ENCODE measurements at regions of chr12 and their contacts with region 1.

Region 1: GRCh38 chr12:133037207-133038005 is at the start of gene ZNF84:
- DNase-seq: peak; percentile 92
- ATAC-seq: peak; percentile 95
- H3K4me3 Mint-ChIP-seq: peak within 1 kb of the TSS; percentile 91
- H3K27ac Mint-ChIP-seq: peak within 1 kb of the TSS; percentile 96
- H3K4me1 Mint-ChIP-seq: peaks cover 20% of the 10 kb centered on the region
- H3K27me3 Mint-ChIP-seq: peaks cover 2% of the 10 kb centered on the region
- CTCF ChIP-seq: no peak
- total RNA-seq, gene ZNF84: 34.8 and 41.1 TPM in 2 replicates

Region 2: GRCh38 chr12:132687208-132688164 is 349.9 kb before region 1 on chr12 and contains the starts of genes POLE and PXMP2:
- CTCF ChIA-PET with region 1: no interaction called
- POLR2A ChIA-PET with region 1: no interaction called
- intact Hi-C with region 1: loop called (anchors 1 kb)
- DNase-seq: peak; percentile 91
- ATAC-seq: peak; percentile 95
- H3K4me3 Mint-ChIP-seq: peak within 1 kb of the TSS; percentile 83
- H3K27ac Mint-ChIP-seq: no peak within 1 kb of the TSS
- H3K4me1 Mint-ChIP-seq: peaks cover 16% of the 10 kb centered on the region
- H3K27me3 Mint-ChIP-seq: no peaks in the 10 kb centered on the region
- CTCF ChIP-seq: no peak
- total RNA-seq, gene POLE: 51.1 and 64.3 TPM in 2 replicates
- total RNA-seq, gene PXMP2: 5.3 and 7.7 TPM in 2 replicates

Region 3: DNA sequence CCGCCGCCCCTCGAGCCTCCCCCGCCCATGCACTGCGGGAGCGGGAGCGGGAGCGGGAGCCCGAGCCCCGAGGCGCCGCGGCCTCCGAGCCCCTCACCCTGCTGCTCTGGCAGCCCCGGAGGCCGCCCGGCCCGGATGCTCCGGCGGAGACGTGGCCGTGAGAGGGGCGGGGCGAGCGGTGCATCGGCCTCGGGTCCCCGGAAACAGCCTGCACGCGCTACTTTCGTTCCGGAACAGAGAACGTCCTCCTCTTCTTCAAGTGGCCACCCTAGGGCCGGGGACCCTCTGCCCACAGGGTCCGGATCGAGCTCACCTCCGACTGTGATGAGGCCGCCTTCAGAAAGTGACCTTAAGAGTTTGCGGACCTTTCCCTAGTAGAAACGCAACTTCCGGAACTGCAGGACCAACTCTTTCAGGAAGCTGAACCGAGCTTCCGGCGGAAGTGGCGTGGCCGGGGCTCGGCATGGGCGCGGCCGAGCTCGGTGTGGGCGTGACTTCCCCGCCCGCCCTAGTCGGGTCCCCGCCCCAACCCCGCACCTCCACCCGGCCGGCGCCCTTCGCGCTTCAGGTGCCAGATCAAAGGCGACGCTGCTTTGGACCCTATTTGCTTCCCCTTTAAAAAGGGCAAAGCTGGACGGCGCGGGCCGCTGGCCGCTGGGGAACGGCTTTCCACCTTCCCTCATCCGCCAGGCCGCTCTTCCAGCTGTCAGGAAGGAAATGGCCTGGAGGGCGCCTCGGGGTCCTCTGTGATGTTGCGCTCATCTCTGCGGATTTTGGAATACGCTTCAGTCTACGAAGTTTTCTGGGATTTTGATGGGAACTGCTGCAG is 208.5 kb before region 1 on chr12 and contains the start of gene GOLGA3:
- CTCF ChIA-PET with region 1: no interaction called
- POLR2A ChIA-PET with region 1: no interaction called
- intact Hi-C with region 1: loop called (anchors 5 kb)
- DNase-seq: peak; percentile 95
- ATAC-seq: peak; percentile 92
- H3K4me3 Mint-ChIP-seq: peak within 1 kb of the TSS; percentile 96
- H3K27ac Mint-ChIP-seq: peak within 1 kb of the TSS; percentile 100
- H3K4me1 Mint-ChIP-seq: peaks cover 50% of the 10 kb centered on the region
- H3K27me3 Mint-ChIP-seq: no peaks in the 10 kb centered on the region
- CTCF ChIP-seq: no peak
- total RNA-seq, gene GOLGA3: 51.3 and 52.4 TPM in 2 replicates

Region 4: DNA sequence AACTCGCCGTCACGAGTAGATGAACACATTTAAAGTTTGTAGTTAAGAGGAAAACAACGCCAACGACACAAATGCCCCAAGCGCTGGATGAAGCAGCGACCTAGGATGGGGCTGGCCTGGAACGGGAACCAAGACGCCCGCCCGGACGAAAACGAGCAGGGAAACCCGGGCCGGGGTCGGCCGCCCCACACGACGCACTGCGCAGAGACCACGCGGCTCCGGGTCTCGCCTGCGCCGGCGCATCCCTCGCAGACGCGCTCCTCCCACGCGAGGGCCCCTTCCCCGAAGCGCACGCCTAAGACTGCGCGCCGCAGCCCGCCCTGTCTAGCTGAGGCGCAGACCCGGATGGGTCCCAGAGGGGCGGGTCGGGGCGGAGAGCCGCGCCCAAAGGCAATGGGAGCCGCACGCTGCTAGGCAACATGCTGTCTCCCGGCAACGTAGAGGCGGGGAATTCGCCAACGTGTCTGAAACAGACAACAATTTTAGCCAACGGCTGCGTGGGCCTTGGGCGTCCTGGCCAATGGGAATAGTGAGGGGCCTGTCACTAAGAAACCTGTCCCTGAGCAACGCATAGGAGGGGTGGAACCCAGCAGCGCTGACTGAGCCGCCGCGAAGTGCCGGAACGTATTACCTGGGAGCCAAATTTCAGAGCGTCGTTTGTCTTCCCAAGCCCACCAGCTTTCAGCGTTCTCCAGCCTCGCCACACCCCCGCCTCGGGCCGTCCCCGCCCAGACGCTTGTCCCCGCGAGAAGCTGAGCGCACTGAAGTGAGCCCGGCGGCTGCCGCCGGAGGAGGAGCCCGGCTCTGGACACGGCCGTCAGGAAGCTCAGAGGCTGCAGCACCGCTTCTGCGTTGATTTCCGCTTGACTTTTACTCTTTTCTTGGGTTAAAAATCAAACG is 129.0 kb before region 1 on chr12:
- CTCF ChIA-PET with region 1: no interaction called
- POLR2A ChIA-PET with region 1: interaction called, 3 read pairs
- intact Hi-C with region 1: loop called (anchors 1 kb)
- DNase-seq: peak; percentile 91
- ATAC-seq: peak; percentile 90
- H3K4me3 Mint-ChIP-seq: peak overlapping the region; percentile 94
- H3K27ac Mint-ChIP-seq: peak overlapping the region; percentile 96
- H3K4me1 Mint-ChIP-seq: peaks cover 13% of the 10 kb centered on the region
- H3K27me3 Mint-ChIP-seq: peaks cover 2% of the 10 kb centered on the region
- CTCF ChIP-seq: no peak

Region 5: GRCh38 chr12:133073836-133074235 is 36.4 kb after region 1 on chr12:
- CTCF ChIA-PET with region 1: no interaction called
- POLR2A ChIA-PET with region 1: no interaction called
- intact Hi-C with region 1: no loop called
- DNase-seq: no peak
- ATAC-seq: no peak
- H3K4me3 Mint-ChIP-seq: no peak overlapping the region
- H3K27ac Mint-ChIP-seq: no peak overlapping the region
- H3K4me1 Mint-ChIP-seq: no peaks in the 10 kb centered on the region
- H3K27me3 Mint-ChIP-seq: no peaks in the 10 kb centered on the region
- CTCF ChIP-seq: no peak

Region 6: GRCh38 chr12:133120385-133121191 is 83.2 kb after region 1 on chr12:
- CTCF ChIA-PET with region 1: no interaction called
- POLR2A ChIA-PET with region 1: interaction called, 15 read pairs
- intact Hi-C with region 1: no loop called
- DNase-seq: no peak
- ATAC-seq: no peak
- H3K4me3 Mint-ChIP-seq: no peak overlapping the region
- H3K27ac Mint-ChIP-seq: no peak overlapping the region
- H3K4me1 Mint-ChIP-seq: no peaks in the 10 kb centered on the region
- H3K27me3 Mint-ChIP-seq: no peaks in the 10 kb centered on the region
- CTCF ChIP-seq: no peak

Region 7: DNA sequence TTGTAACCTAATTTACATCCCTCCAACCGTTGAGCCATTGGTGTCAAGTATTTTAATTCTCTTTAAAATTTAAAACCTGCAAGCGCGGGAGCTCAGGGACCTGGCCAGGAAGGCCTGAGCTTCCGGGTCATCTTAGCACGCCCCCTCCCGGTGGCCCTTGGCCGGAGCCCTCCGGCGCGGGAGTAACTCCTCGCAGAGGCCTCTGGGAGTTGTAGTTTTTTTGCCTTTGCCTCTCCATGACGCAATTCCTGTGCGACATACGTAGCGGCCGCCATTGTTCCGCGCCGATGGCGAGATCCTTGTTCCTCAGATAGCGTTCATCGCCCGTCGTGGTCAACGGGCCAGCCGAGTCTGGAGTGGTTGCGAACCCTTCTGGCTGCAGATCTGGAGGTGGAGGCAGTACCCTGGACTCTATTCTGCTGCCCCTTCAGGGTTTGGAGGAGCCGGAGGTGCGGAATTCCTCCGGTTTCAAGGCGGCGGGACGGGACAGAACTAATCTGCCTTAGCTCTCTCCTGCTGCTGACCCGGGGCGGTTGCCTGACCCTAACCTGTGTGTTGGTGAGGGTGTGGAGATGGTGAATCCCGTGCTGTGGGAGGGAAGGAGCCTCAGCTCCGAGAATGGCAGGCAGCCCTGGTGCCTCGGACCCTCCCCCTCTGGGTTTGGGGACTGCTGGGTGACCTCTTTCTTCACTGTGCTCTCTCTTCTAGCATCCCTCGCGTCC is 144.0 kb after region 1 on chr12 and contains the start of gene ZNF268:
- CTCF ChIA-PET with region 1: no interaction called
- POLR2A ChIA-PET with region 1: interaction called, 8 read pairs
- intact Hi-C with region 1: loop called (anchors 1 kb)
- DNase-seq: peak; percentile 86
- ATAC-seq: peak; percentile 97
- H3K4me3 Mint-ChIP-seq: peak within 1 kb of the TSS; percentile 94
- H3K27ac Mint-ChIP-seq: peak within 1 kb of the TSS; percentile 89
- H3K4me1 Mint-ChIP-seq: peaks cover 20% of the 10 kb centered on the region
- H3K27me3 Mint-ChIP-seq: no peaks in the 10 kb centered on the region
- CTCF ChIP-seq: no peak
- total RNA-seq, gene ZNF268: 29.1 and 29.3 TPM in 2 replicates

Measured in activated B cell treated with CpG ODN at 0.5 μM for 24 hours (primary cell).